ENCODE measurements at regions of chr14 and their contacts with region 1.

Region 1: DNA sequence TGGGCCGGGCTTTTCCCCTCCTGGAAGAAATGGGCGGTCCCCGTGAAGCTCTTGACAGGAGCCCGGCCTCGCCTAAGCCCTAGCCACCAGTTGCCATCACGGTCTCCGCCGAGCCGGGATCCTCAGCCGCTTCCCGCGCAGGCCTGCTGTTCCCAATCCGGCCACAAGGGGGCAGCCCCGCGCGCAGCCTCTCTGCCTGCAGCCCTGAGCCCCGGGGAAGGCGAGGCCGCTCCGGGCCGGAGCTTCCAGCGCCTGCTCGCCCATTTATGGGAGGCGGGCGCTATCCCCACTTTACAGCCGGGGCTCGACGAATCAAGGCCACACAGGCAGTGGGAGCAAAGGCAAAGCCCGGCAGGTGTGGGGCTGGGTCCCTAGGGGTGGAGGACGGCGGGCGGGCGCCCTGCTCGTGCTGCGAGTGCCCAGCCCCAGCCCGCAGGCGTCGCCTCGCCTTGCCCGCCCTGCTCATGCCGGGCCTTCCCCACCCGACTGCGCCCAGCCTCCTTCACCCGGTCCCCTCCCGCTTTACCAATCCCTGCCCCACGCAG is 61.5 kb downstream of the LGMN start:
- DNase-seq: peak; percentile 24 to 77 (median 62)
- ATAC-seq: peak; percentile 85
- H3K4me3 ChIP-seq: no peak overlapping the region
- H3K4me3 Mint-ChIP-seq: no peak overlapping the region
- H3K27ac ChIP-seq: no peak overlapping the region
- H3K27ac Mint-ChIP-seq: no peak overlapping the region
- H3K4me1 ChIP-seq: peaks cover 14% of the 10 kb centered on the region
- H3K4me1 Mint-ChIP-seq: peaks cover 6% of the 10 kb centered on the region
- H3K27me3 ChIP-seq: no peaks in the 10 kb centered on the region
- H3K27me3 Mint-ChIP-seq: no peaks in the 10 kb centered on the region
- CTCF ChIP-seq: peak; percentile 83

Region 2: GRCh38 chr14:92382677-92383076 is 304.3 kb before region 1 on chr14:
- CTCF ChIA-PET with region 1: no interaction called
- POLR2A ChIA-PET with region 1: no interaction called
- intact Hi-C with region 1: no loop called
- DNase-seq: no peak
- ATAC-seq: no peak
- H3K4me3 ChIP-seq: no peak overlapping the region
- H3K4me3 Mint-ChIP-seq: no peak overlapping the region
- H3K27ac ChIP-seq: no peak overlapping the region
- H3K27ac Mint-ChIP-seq: no peak overlapping the region
- H3K4me1 ChIP-seq: no peaks in the 10 kb centered on the region
- H3K4me1 Mint-ChIP-seq: no peaks in the 10 kb centered on the region
- H3K27me3 ChIP-seq: no peaks in the 10 kb centered on the region
- H3K27me3 Mint-ChIP-seq: no peaks in the 10 kb centered on the region
- CTCF ChIP-seq: no peak

Region 3: DNA sequence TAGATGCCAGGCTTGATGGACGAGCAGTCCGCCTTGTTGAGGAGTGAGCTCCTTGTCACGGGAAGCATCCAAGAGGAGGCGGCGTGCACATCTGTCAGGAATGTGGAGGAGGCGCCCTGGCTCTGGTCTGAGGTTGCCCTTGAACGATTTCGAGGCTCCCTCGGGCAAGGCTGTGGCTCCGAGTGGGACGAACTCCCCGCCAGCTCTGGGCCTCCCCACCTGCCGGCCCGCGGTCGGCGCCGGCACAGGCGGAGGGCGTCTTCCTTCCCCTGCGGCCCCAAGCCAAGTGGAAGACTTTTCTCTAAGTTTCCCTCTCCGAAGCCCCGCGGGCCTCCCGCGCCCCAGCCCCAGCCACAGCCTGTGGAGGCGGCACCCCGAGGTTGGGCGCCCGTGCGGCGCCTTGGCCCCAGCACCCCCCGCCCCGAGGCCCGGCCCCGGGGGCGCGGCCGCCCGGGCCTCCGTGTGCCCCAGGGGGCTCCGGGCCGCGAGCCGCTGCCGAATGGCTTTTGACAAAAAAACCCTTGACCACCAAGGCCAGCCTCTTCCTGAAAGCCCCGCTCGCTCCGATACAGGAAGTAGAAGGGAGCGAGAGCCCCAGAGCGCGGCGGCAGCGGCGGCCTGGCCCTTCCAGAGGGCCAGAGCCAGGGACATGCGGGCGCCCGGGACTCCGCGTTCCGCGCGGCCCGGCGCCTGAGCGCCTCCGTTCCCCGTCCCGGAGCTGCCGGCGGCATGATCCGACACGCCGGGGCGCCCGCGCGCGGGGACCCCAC is 173.6 kb before region 1 on chr14 and contains the start of gene RIN3:
- CTCF ChIA-PET with region 1: no interaction called
- POLR2A ChIA-PET with region 1: no interaction called
- intact Hi-C with region 1: loop called in 1 of 2 experiments (anchors 10 kb)
- DNase-seq: peak in 11 of 14 experiments; percentile 19 to 69 (median 29)
- ATAC-seq: peak; percentile 57
- H3K4me3 ChIP-seq: peak within 1 kb of the TSS; percentile 82
- H3K4me3 Mint-ChIP-seq: peak within 1 kb of the TSS; percentile 78
- H3K27ac ChIP-seq: peak within 1 kb of the TSS in 1 of 2 donors; percentile 21
- H3K27ac Mint-ChIP-seq: peak within 1 kb of the TSS; percentile 2
- H3K4me1 ChIP-seq: peaks cover 50% of the 10 kb centered on the region
- H3K4me1 Mint-ChIP-seq: peaks cover 41% of the 10 kb centered on the region
- H3K27me3 ChIP-seq: no peaks in the 10 kb centered on the region
- H3K27me3 Mint-ChIP-seq: no peaks in the 10 kb centered on the region
- CTCF ChIP-seq: no peak
- total RNA-seq, gene RIN3: 67.9 to 72.2 TPM

Region 4: GRCh38 chr14:92659765-92660561 is 27.0 kb before region 1 on chr14:
- CTCF ChIA-PET with region 1: no interaction called
- POLR2A ChIA-PET with region 1: no interaction called
- intact Hi-C with region 1: no loop called
- DNase-seq: peak in 3 of 14 experiments; percentile 33 to 60 (median 53)
- ATAC-seq: no peak
- H3K4me3 ChIP-seq: no peak overlapping the region
- H3K4me3 Mint-ChIP-seq: peak overlapping the region; percentile 55
- H3K27ac ChIP-seq: peak overlapping the region; percentile 24 to 59
- H3K27ac Mint-ChIP-seq: peak overlapping the region; percentile 97
- H3K4me1 ChIP-seq: peaks cover 86% of the 10 kb centered on the region
- H3K4me1 Mint-ChIP-seq: peaks cover 96% of the 10 kb centered on the region
- H3K27me3 ChIP-seq: no peaks in the 10 kb centered on the region
- H3K27me3 Mint-ChIP-seq: no peaks in the 10 kb centered on the region
- CTCF ChIP-seq: no peak

Region 5: GRCh38 chr14:92793709-92794546 is 107.0 kb after region 1 on chr14 and contains the start of gene GOLGA5:
- CTCF ChIA-PET with region 1: no interaction called
- POLR2A ChIA-PET with region 1: no interaction called
- intact Hi-C with region 1: no loop called
- DNase-seq: peak; percentile 95 to 100 (median 98)
- ATAC-seq: peak; percentile 90
- H3K4me3 ChIP-seq: peak within 1 kb of the TSS; percentile 81
- H3K4me3 Mint-ChIP-seq: peak within 1 kb of the TSS; percentile 95
- H3K27ac ChIP-seq: peak within 1 kb of the TSS; percentile 59 to 77
- H3K27ac Mint-ChIP-seq: peak within 1 kb of the TSS; percentile 80
- H3K4me1 ChIP-seq: peaks cover 23% of the 10 kb centered on the region
- H3K4me1 Mint-ChIP-seq: peaks cover 45% of the 10 kb centered on the region
- H3K27me3 ChIP-seq: no peaks in the 10 kb centered on the region
- H3K27me3 Mint-ChIP-seq: no peaks in the 10 kb centered on the region
- CTCF ChIP-seq: no peak
- total RNA-seq, gene GOLGA5: 5.2 to 6.8 TPM